CD4-positive, alpha-beta memory T cell (primary cell): ENCODE measurements at regions of chr20 and their contacts with region 1.

Region 1: GRCh38 chr20:23606652-23607049 is 934 bp upstream of the CST9 start:
- DNase-seq: peak; percentile 18 to 40 (median 33)
- H3K4me3 ChIP-seq: no peak overlapping the region
- H3K4me3 Mint-ChIP-seq: no peak overlapping the region
- H3K27ac ChIP-seq: no peak overlapping the region
- H3K27ac Mint-ChIP-seq: no peak overlapping the region
- H3K4me1 ChIP-seq: no peaks in the 10 kb centered on the region
- H3K4me1 Mint-ChIP-seq: no peaks in the 10 kb centered on the region
- H3K27me3 ChIP-seq: no peaks in the 10 kb centered on the region
- H3K27me3 Mint-ChIP-seq: peaks cover 3 to 6% of the 10 kb centered on the region in 2 donors

Region 2: DNA sequence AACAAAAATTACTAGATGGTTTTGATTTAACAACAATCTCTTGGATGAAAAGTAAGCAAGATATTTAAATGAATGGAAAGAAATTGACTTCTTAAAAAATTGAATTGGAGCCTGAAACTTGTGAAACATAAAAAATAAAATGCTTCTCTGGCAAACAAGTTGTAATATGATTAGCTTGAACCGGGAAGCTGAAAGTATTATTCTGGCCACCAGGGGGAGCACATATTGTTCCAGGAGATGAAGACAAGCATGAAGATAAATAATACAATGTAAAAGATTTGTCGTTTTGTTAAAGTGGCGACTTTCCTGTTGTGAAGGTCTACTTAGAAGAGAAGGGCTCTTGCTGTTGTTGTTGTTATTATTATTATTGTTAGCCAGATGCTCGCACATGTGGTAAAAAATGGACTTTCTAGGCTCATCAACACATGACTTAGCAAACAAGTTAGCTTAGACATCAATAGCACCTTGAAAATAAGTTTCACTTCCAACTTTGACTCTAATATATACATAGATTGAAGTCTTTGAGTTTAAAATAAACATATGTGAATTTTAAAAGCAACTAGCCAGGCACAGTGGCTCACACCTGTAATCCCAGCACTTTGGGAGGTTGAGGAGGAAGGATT is 1886.9 kb before region 1 on chr20:
- CTCF ChIA-PET with region 1: no interaction called
- POLR2A ChIA-PET with region 1: no interaction called
- intact Hi-C with region 1: loop called (anchors 10 kb)
- DNase-seq: peak in 4 of 5 donors; percentile 6 to 16 (median 10)
- H3K4me3 ChIP-seq: no peak overlapping the region
- H3K4me3 Mint-ChIP-seq: no peak overlapping the region
- H3K27ac ChIP-seq: no peak overlapping the region
- H3K27ac Mint-ChIP-seq: no peak overlapping the region
- H3K4me1 ChIP-seq: no peaks in the 10 kb centered on the region
- H3K4me1 Mint-ChIP-seq: peaks cover 0 to 3% (median 0%) of the 10 kb centered on the region in 4 donors
- H3K27me3 ChIP-seq: peaks cover 11% of the 10 kb centered on the region
- H3K27me3 Mint-ChIP-seq: peaks cover 22 to 27% of the 10 kb centered on the region in 2 donors

Region 3: DNA sequence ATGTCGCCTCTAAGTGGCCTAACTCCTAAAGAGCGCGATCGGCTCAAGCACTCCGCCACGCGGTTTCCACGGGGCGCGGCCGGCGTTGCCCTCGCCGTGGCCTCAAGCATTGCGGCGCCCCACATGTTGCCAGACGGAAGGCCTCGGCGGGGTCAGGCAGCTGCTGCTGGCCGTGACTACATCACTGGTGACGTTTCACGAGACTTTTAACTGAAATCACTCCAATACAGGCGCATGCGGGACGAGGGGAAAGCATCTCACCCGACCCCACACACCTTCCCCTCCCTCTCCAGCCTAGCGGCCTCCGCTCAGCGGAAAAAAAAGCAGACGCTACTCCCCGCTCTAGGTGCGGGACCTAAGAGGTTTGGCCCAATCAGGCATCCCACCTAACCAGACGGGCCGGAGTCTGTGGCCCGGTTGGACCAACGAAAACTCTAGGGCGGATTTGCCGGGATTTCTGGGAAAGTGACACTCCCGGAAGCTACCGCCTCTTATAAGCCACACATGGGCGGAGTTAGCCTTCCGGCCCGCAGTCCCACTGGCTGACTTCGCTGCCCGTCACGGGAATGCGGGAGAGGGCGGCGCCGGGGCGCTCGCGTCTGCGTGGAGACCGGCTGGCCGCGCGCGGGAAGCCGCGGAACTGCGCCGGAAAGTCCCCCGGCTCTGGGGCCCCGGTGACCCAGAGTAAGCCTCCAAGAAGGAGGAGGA is 256.3 kb before region 1 on chr20 and contains the start of gene NXT1:
- CTCF ChIA-PET with region 1: interaction called, 10 read pairs
- POLR2A ChIA-PET with region 1: no interaction called
- intact Hi-C with region 1: no loop called
- DNase-seq: peak; percentile 96 to 98 (median 96)
- H3K4me3 ChIP-seq: peak within 1 kb of the TSS; percentile 93 to 97
- H3K4me3 Mint-ChIP-seq: peak within 1 kb of the TSS; percentile 85 to 99 (median 98)
- H3K27ac ChIP-seq: peak within 1 kb of the TSS; percentile 100
- H3K27ac Mint-ChIP-seq: peak within 1 kb of the TSS; percentile 99 to 100 (median 100)
- H3K4me1 ChIP-seq: peaks cover 21% of the 10 kb centered on the region
- H3K4me1 Mint-ChIP-seq: peaks cover 14 to 38% (median 23%) of the 10 kb centered on the region in 4 donors
- H3K27me3 ChIP-seq: no peaks in the 10 kb centered on the region
- H3K27me3 Mint-ChIP-seq: no peaks in the 10 kb centered on the region
- total RNA-seq, gene NXT1: 21.5 to 23.6 TPM

Region 4: GRCh38 chr20:23588434-23589403 is 17.9 kb before region 1 on chr20:
- CTCF ChIA-PET with region 1: no interaction called
- POLR2A ChIA-PET with region 1: no interaction called
- intact Hi-C with region 1: no loop called
- DNase-seq: no peak
- H3K4me3 ChIP-seq: no peak overlapping the region
- H3K4me3 Mint-ChIP-seq: peak overlapping the region in 3 of 8 donors; percentile 39 to 66 (median 39)
- H3K27ac ChIP-seq: no peak overlapping the region
- H3K27ac Mint-ChIP-seq: peak overlapping the region in 1 of 7 donors; percentile 77
- H3K4me1 ChIP-seq: no peaks in the 10 kb centered on the region
- H3K4me1 Mint-ChIP-seq: no peaks in the 10 kb centered on the region
- H3K27me3 ChIP-seq: no peaks in the 10 kb centered on the region
- H3K27me3 Mint-ChIP-seq: peaks cover 2 to 20% of the 10 kb centered on the region in 2 donors